ENCODE measurements at regions of chr7 and their contacts with region 1.

Region 1: DNA sequence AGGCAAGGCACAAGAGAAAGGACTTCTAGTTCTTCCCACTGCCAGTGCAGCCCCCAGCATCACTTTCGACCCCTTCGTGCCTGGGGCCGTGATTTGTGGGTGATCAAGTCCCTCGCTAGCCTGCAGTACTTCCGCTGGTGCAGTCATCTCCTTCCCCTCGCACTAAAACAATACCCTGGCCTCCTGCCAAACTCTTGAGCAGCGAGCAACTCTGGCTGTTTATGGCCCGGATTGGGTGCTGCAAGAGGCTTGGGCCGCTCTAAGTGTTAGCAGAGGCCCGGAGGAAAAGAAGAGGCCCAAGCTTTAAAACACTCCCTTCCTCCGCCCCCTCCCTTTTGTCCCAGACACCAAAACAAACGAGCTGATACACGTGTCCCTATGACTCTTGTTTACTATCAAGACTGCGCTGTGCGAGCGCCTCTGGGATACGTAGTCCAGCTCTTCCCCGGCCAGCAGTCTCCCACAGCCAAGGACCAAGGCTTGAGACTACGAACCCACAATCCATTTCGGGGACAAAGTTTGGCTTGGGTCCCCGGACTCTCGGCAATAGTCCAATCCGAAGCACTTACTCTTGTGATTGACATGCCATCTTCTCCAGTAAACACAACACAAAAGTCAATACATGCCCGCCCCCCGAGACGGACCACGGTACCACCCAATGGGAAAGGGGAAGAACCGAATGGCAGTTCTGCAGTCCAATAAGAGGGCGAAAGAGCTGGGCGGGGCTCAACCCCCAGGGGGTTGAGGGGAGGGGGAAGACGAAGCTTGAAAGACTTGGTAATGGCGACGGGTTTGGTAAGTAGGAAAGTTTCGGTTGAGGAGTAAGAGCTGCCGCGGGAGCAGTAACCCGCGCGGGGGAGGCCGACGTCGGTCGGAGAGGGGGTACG is at the start of gene HBP1:
- DNase-seq: peak; percentile 99
- H3K4me3 ChIP-seq: peak within 1 kb of the TSS; percentile 77
- H3K27ac ChIP-seq: peak within 1 kb of the TSS; percentile 86
- H3K4me1 ChIP-seq: peaks cover 26% of the 10 kb centered on the region
- H3K27me3 ChIP-seq: no peaks in the 10 kb centered on the region
- CTCF ChIP-seq: no peak
- total RNA-seq, gene HBP1: 60.0 and 62.1 TPM in 2 replicates

Region 2: DNA sequence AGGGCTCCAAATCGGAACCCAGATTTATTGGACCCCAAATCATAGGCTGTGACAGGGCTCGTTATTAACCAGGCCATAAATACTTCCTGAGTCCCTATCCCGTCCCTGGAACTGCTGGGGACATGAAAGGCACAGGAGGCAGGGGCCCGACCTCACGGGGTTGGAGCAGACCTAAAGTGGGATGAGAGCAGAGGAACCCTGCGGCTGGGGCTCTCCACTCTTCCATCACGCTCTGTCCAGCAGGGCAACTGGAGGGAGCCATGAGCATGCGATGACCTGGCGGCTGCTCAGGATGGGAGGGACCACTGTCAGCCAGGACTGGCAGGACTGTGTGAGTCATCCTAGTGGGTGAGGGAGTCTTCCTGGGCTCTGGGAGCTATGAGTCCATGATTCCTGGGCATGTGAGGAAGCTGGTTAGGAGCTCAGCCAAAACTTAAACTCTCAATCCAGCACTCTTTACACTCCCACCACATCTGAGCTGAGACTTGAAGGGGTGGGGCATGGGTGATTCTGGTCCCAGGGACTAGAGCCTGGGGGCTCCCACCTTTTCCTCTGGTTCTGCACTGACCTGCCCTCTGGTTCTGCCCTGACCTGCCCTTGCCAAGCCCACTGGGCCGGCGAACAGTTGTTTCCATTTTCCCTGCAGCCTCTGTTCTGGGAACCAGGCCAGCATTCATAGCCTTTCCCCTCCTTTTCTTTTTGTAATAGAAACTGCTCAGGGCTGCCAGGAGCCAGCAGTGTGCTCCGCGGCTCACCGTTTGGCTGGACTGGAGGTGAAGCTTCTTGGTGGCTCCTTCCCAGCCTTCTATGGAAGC is 1103.5 kb before region 1 on chr7:
- CTCF ChIA-PET with region 1: no interaction called
- POLR2A ChIA-PET with region 1: no interaction called
- intact Hi-C with region 1: loop called (anchors 2 kb)
- DNase-seq: peak; percentile 93 to 97
- H3K4me3 ChIP-seq: peak overlapping the region; percentile 63
- H3K27ac ChIP-seq: peak overlapping the region; percentile 98
- H3K4me1 ChIP-seq: peaks cover 85% of the 10 kb centered on the region
- H3K27me3 ChIP-seq: no peaks in the 10 kb centered on the region
- CTCF ChIP-seq: no peak

Region 3: GRCh38 chr7:106947244-106947728 is 221.2 kb before region 1 on chr7:
- CTCF ChIA-PET with region 1: interaction called, 4 read pairs
- POLR2A ChIA-PET with region 1: interaction called, 9 read pairs
- intact Hi-C with region 1: loop called (anchors 5 kb)
- DNase-seq: peak; percentile 50 to 60
- H3K4me3 ChIP-seq: no peak overlapping the region
- H3K27ac ChIP-seq: no peak overlapping the region
- H3K4me1 ChIP-seq: no peaks in the 10 kb centered on the region
- H3K27me3 ChIP-seq: no peaks in the 10 kb centered on the region; the same call in 1 of the 2 replicates
- CTCF ChIP-seq: peak; percentile 75

Region 4: GRCh38 chr7:107150375-107151073 is 18.0 kb before region 1 on chr7:
- CTCF ChIA-PET with region 1: interaction called, 16 read pairs
- POLR2A ChIA-PET with region 1: interaction called, 35 read pairs
- intact Hi-C with region 1: no loop called
- DNase-seq: peak; percentile 45 to 70
- H3K4me3 ChIP-seq: no peak overlapping the region
- H3K27ac ChIP-seq: no peak overlapping the region
- H3K4me1 ChIP-seq: peaks cover 12% of the 10 kb centered on the region; the same call in 1 of the 2 replicates
- H3K27me3 ChIP-seq: no peaks in the 10 kb centered on the region
- CTCF ChIP-seq: peak; percentile 87

Region 5: DNA sequence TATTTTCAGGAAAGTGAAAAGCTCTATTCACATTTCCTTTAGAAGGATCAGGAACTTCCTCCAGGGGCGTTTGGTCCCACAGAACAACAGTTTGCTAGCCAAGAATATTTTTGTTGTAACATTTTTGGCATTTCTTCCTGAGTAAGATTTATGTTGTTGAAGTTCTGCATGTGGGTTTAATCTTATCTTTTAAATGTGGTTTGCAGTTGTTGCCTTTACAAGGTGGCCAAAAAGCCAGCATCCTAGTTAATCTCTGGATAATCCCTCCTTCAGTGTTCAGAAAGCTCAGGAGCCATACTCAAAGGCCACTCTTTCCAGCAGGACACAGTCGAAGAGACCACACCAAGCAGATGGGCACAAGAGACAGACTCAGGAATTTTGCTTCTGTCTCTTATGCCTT is 522.1 kb after region 1 on chr7:
- CTCF ChIA-PET with region 1: interaction called, 3 read pairs
- POLR2A ChIA-PET with region 1: interaction called, 11 read pairs
- intact Hi-C with region 1: no loop called
- DNase-seq: no peak
- H3K4me3 ChIP-seq: no peak overlapping the region
- H3K27ac ChIP-seq: no peak overlapping the region
- H3K4me1 ChIP-seq: no peaks in the 10 kb centered on the region
- H3K27me3 ChIP-seq: no peaks in the 10 kb centered on the region
- CTCF ChIP-seq: no peak

Region 6: GRCh38 chr7:107953924-107954303 is 785.4 kb after region 1 on chr7:
- CTCF ChIA-PET with region 1: interaction called, 20 read pairs
- POLR2A ChIA-PET with region 1: no interaction called
- intact Hi-C with region 1: no loop called
- DNase-seq: no peak
- H3K4me3 ChIP-seq: no peak overlapping the region
- H3K27ac ChIP-seq: peak overlapping the region; percentile 86
- H3K4me1 ChIP-seq: peaks cover 69% of the 10 kb centered on the region
- H3K27me3 ChIP-seq: no peaks in the 10 kb centered on the region
- CTCF ChIP-seq: no peak

Measured in PC-9 (cell line).